Heart left ventricle (tissue), 16 donors: ENCODE measurements at regions of chr12 and their contacts with region 1.

Region 1: GRCh38 chr12:42023733-42024494 is 120.8 kb downstream of the GXYLT1 start:
- DNase-seq: peak; percentile 71 to 88 (median 74)
- ATAC-seq: peak; percentile 57 to 93 (median 91)
- H3K4me3 ChIP-seq: peak overlapping the region in 10 of 12 donors; percentile 17 to 57 (median 44)
- H3K27ac ChIP-seq: no peak overlapping the region
- H3K4me1 ChIP-seq: peaks cover 0 to 14% (median 0%) of the 10 kb centered on the region in 12 donors
- H3K27me3 ChIP-seq: no peaks in the 10 kb centered on the region
- CTCF ChIP-seq: peak; percentile 90 to 98 (median 96)
- POLR2A ChIP-seq: no peak

Region 2: GRCh38 chr12:40946612-40947194 is 1077.2 kb before region 1 on chr12:
- intact Hi-C with region 1: loop called in 7 of 10 experiments (anchors 5 to 10 kb)
- DNase-seq: no peak
- ATAC-seq: no peak
- H3K4me3 ChIP-seq: no peak overlapping the region
- H3K27ac ChIP-seq: no peak overlapping the region
- H3K4me1 ChIP-seq: no peaks in the 10 kb centered on the region
- H3K27me3 ChIP-seq: peaks cover 0 to 7% (median 0%) of the 10 kb centered on the region in 9 donors
- CTCF ChIP-seq: peak; percentile 42 to 76 (median 62)
- POLR2A ChIP-seq: no peak

Region 3: DNA sequence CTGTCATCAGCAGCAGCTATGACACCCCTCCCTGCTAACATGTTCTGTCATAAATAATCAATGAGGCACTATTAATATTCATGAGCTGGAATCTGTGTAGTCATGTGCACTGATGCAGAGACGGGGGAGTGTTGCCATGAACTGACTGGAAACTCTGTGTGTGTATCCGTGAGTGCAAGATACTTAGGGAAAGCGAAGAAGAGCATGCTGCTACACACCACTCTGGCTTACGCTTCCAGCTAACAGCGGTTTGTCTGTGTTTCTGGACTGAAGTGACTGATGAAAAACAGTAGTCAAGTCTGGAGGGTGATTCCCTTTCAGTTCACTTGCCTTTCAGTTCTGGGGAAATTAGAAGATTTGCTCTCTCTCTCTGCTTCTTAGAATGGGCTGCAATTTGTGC is 586.4 kb before region 1 on chr12:
- intact Hi-C with region 1: loop called in 1 of 10 experiments (anchors 5 kb)
- DNase-seq: no peak
- ATAC-seq: no peak
- H3K4me3 ChIP-seq: no peak overlapping the region
- H3K27ac ChIP-seq: no peak overlapping the region
- H3K4me1 ChIP-seq: no peaks in the 10 kb centered on the region
- H3K27me3 ChIP-seq: no peaks in the 10 kb centered on the region
- CTCF ChIP-seq: no peak
- POLR2A ChIP-seq: no peak

Region 4: GRCh38 chr12:41684997-41685396 is 338.9 kb before region 1 on chr12:
- intact Hi-C with region 1: loop called in 4 of 10 experiments (anchors 2 to 5 kb)
- DNase-seq: no peak
- ATAC-seq: no peak
- H3K4me3 ChIP-seq: no peak overlapping the region
- H3K27ac ChIP-seq: no peak overlapping the region
- H3K4me1 ChIP-seq: no peaks in the 10 kb centered on the region
- H3K27me3 ChIP-seq: no peaks in the 10 kb centered on the region
- CTCF ChIP-seq: peak in 4 of 12 donors; percentile 31 to 64 (median 54)
- POLR2A ChIP-seq: no peak

Region 5: DNA sequence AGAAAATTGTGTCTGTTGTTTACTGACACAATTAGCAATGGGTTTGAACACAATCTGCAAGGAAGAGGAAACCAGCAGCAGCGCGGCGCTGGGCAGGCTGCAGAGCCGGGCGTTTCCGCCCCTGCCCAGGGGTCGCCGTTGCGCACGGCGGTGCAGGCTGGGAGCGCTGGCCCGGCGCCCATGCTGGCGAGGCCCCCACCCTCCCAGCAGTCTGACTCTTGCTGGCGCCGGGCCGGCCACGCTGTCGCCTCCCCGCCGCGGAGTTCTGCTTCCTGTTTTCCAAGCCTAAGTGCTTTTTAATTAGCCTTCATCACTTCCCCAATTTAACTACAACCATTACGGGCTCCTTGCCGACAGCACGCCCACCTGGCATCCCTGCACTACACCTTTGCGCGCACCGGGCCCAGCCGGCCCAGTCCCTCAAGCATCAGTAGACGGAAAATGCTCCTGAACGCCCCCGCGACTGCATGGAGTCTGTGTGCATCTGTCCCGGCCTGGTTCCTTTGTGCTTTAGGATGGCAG is 91.4 kb before region 1 on chr12:
- intact Hi-C with region 1: loop called in 2 of 10 experiments (anchors 5 to 10 kb)
- DNase-seq: peak; percentile 79 to 92 (median 82)
- ATAC-seq: peak; percentile 81 to 95 (median 94)
- H3K4me3 ChIP-seq: peak overlapping the region; percentile 17 to 64 (median 56)
- H3K27ac ChIP-seq: peak overlapping the region; percentile 6 to 83 (median 56)
- H3K4me1 ChIP-seq: peaks cover 0 to 8% (median 2%) of the 10 kb centered on the region in 12 donors
- H3K27me3 ChIP-seq: no peaks in the 10 kb centered on the region
- CTCF ChIP-seq: peak in 3 of 12 donors; percentile 6 to 33 (median 26)
- POLR2A ChIP-seq: no peak

Region 6: GRCh38 chr12:42332301-42333285 is 308.7 kb after region 1 on chr12:
- intact Hi-C with region 1: loop called in 1 of 10 experiments (anchors 5 kb)
- DNase-seq: no peak
- ATAC-seq: peak in 3 of 4 donors; percentile 39 to 67 (median 44)
- H3K4me3 ChIP-seq: no peak overlapping the region
- H3K27ac ChIP-seq: no peak overlapping the region
- H3K4me1 ChIP-seq: peaks cover 0 to 28% (median 9%) of the 10 kb centered on the region in 12 donors
- H3K27me3 ChIP-seq: no peaks in the 10 kb centered on the region
- CTCF ChIP-seq: peak; percentile 56 to 81 (median 66)
- POLR2A ChIP-seq: no peak